A549 (cell line): ENCODE measurements at regions of chr11 and their contacts with region 1.

Region 1: DNA sequence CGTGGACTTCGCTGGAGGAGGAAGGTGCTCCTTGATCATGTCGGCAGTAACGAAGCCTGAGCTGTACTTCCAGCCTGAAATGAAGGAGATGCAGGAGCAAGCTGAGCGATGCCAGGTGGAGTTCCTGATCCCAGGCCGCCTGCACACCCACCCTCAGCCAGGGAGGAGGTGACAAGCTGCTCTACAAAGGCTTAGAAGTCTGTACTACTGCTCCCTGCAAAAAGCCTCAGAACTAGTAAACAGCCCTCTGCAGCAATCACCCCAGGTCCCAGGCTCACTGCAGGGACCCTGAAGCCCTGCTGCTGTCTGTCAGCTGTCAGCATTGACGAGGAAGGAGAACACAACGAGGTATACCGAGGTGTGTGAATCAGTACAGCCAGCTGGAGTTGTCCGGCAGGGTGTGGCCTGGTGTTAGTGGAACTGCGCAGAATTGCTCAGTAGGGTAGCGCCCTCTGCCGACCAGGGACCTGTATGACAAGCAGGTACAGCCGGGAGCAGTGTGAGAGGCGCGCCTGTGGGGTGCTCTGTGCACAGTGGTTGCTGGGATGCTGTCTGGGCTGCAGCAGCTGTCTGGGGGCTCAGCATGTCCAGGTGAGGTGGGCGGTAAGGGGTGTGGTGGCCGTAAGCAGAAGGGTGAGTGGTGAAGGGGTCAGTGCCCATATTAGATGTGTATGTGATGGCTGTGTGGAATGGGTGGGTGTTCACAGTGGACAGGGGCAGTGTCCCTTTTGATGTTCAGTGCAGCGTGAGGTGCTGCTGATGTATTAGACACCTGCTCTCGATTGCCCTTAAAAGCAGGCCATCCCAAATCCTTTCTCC is 7.6 kb downstream of the CYB5R2 start:
- DNase-seq: peak; percentile 85 to 92
- ATAC-seq: peak; percentile 94 to 99
- H3K4me3 ChIP-seq: no peak overlapping the region
- H3K27ac ChIP-seq: peak overlapping the region in 1 of 2 experiments; percentile 60; a peak in 3 of 6 replicates
- H3K4me1 ChIP-seq: peaks cover 4% of the 10 kb centered on the region; the same call in 2 of the 3 replicates
- CTCF ChIP-seq: peak; percentile 83
- EP300 ChIP-seq: no peak
- POLR2A ChIP-seq: no peak
- RAD21 ChIP-seq: peak; percentile 93 to 96

Region 2: DNA sequence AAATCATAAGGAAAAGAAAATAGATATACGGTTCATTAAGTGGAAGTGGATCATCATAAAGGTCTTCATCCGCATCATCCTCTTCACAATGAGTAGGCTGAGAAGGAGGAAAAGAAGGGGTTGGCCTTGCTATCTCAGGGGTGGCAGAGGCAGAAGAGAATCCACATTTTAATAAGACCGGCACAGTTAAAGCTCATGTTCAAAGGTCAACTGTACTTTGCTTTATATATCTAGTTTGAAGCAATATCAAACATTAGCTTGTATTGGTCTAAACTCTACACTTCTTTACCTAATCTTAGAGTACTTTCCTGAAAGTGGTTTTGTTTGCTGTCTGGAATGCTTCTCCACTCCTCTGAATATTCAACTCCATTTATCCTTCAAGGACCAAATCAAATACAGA is 157.6 kb before region 1 on chr11:
- CTCF ChIA-PET with region 1: interaction called, 76 read pairs
- POLR2A ChIA-PET with region 1: no interaction called
- DNase-seq: no peak
- ATAC-seq: no peak
- H3K4me3 ChIP-seq: no peak overlapping the region
- H3K27ac ChIP-seq: no peak overlapping the region
- H3K4me1 ChIP-seq: 0 out of 3 replicates have a peak, but pooled peaks cover 6% of the 10 kb centered on the region
- CTCF ChIP-seq: no peak
- EP300 ChIP-seq: no peak
- POLR2A ChIP-seq: no peak
- RAD21 ChIP-seq: no peak

Region 3: DNA sequence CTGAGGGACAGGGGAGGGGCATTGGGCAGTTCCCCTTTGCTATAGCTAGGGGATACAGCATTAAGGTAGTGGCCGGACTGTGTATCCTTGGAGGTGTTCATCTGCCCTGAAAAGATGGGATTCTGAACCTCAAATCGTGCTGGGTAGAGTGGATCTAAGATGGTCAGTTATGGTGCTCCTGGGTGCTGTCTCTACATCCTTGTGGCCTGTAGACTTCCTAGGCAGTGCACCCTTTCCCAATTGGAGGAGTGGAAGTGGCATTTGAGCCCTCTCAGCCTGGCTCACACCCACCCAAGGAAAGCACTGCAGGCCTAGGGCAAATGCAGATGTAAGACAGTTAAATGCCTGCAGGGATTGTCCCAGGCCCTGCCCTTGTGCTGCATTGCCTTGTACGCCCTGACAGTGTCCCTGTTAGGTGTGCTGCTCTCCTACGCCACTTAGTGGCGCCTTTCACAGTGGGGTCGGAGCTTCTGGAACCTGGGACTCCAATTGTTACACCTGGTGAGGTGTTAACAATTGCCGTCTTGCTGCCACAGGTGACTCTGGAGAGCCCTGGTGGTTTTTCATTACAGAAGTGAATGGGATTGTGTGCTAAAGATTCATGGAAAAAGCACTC is 116.9 kb before region 1 on chr11:
- CTCF ChIA-PET with region 1: interaction called, 30 read pairs
- POLR2A ChIA-PET with region 1: no interaction called
- DNase-seq: peak in 1 of 2 experiments; percentile 27
- ATAC-seq: peak; percentile 67 to 92; a peak in 5 of 6 replicates
- H3K4me3 ChIP-seq: no peak overlapping the region
- H3K27ac ChIP-seq: no peak overlapping the region
- H3K4me1 ChIP-seq: peaks cover 10% of the 10 kb centered on the region; the same call in 1 of the 3 replicates
- CTCF ChIP-seq: peak; percentile 22; the same call in 1 of the 3 replicates
- EP300 ChIP-seq: no peak
- POLR2A ChIP-seq: no peak
- RAD21 ChIP-seq: peak in 1 of 2 experiments; percentile 25; a peak in 2 of 5 replicates

Region 4: GRCh38 chr11:7579361-7579791 is 86.3 kb before region 1 on chr11:
- CTCF ChIA-PET with region 1: interaction called, 209 read pairs
- POLR2A ChIA-PET with region 1: interaction called, 4 read pairs
- DNase-seq: no peak
- ATAC-seq: no peak
- H3K4me3 ChIP-seq: no peak overlapping the region
- H3K27ac ChIP-seq: peak overlapping the region; percentile 17 to 88
- H3K4me1 ChIP-seq: peaks cover 66% of the 10 kb centered on the region
- CTCF ChIP-seq: no peak
- EP300 ChIP-seq: no peak
- POLR2A ChIP-seq: no peak
- RAD21 ChIP-seq: no peak

Region 5: DNA sequence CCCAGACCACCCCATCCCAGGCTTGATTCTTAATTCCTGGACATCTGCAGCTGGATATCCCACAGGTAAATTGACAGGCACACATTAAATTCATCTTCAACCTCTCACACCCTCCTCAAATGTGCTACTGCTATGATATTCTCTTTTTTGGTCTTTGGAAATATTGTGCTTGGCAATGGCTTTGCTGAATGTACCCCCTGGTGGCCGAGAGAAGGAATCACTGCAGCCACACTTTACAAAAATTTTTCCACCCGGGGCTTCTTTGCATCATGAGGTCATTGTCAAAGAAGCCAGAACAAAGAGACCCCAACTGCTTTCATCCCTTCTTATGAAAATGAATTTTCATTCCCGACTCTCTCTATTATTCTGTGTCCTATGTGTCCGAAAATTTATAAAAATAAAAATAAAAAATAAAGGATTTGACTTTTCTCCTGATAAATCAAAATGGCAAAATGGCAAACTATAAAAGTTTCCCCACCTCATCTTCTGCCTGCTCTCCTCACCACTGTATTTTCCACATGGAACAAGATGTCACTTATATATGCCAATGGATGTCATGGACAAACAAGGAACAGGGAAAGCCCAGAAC is 22.6 kb after region 1 on chr11:
- CTCF ChIA-PET with region 1: interaction called, 26 read pairs
- POLR2A ChIA-PET with region 1: no interaction called
- DNase-seq: peak; percentile 44 to 50
- ATAC-seq: peak; percentile 39 to 75; a peak in 3 of 6 replicates
- H3K4me3 ChIP-seq: no peak overlapping the region
- H3K27ac ChIP-seq: no peak overlapping the region
- H3K4me1 ChIP-seq: no peaks in the 10 kb centered on the region
- CTCF ChIP-seq: peak; percentile 74
- EP300 ChIP-seq: no peak
- POLR2A ChIP-seq: no peak
- RAD21 ChIP-seq: peak; percentile 66 to 69